ENCODE measurements at regions of chr12 and their contacts with region 1.

Region 1: DNA sequence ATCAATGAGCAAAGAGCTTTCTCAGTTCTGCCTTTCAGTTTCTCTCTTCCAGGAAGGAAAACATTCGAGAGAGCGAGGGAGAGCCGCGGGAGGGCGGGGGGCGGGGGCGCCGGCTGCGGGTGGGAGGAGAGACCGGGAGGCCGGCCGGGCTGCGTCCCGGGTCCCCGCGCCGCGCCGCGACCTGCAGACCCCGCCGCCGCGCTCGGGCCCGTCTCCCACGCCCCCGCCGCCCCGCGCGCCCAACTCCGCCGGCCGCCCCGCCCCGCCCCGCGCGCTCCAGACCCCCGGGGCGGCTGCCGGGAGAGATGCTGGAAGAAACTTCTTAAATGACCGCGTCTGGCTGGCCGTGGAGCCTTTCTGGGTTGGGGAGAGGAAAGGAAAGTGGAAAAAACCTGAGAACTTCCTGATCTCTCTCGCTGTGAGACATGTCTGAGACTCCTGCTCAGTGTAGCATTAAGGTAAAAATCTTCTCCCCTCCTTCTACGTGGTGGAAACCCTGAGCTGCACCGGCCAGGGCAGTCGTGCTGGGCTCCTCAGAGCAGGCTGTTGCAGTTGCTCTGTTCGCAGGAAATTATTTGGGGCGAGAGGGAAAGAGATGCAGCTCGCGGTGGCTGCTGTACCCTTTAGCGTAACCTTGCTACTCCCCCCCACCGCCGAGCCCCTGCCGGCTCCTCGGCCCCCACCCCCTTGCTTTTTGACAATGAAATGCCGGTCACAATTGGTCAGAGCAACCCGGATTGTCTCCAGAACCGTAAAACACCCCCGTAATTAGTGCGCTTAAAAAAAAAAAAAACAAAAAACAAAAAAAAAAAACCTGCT is 438 bp downstream of the ETV6 start:
- DNase-seq: no peak
- H3K4me3 ChIP-seq: peak overlapping the region; percentile 85 to 90 (median 86)
- H3K27ac ChIP-seq: peak overlapping the region; percentile 97 to 100
- H3K4me1 ChIP-seq: peaks cover 0 to 12% of the 10 kb centered on the region in 2 donors
- H3K27me3 ChIP-seq: no peaks in the 10 kb centered on the region
- CTCF ChIP-seq: no peak
- POLR2A ChIP-seq: no peak

Region 2: GRCh38 chr12:11719678-11720099 is 69.8 kb after region 1 on chr12:
- intact Hi-C with region 1: loop called (anchors 10 kb)
- DNase-seq: peak in 1 of 2 donors; percentile 71
- H3K4me3 ChIP-seq: peak overlapping the region in 1 of 3 donors; percentile 16
- H3K27ac ChIP-seq: peak overlapping the region; percentile 41 to 70
- H3K4me1 ChIP-seq: peaks cover 5 to 23% of the 10 kb centered on the region in 2 donors
- H3K27me3 ChIP-seq: no peaks in the 10 kb centered on the region
- CTCF ChIP-seq: no peak
- POLR2A ChIP-seq: no peak